Mammary epithelial cell (primary cell): ENCODE measurements at regions of chr11 and their contacts with region 1.

Region 1: GRCh38 chr11:123054301-123055065 is 7.5 kb downstream of the HSPA8 start:
- DNase-seq: peak; percentile 44
- H3K4me3 ChIP-seq: no peak overlapping the region
- H3K27ac ChIP-seq: no peak overlapping the region
- H3K4me1 ChIP-seq: peaks cover 14% of the 10 kb centered on the region
- H3K27me3 ChIP-seq: no peaks in the 10 kb centered on the region
- CTCF ChIP-seq: peak; percentile 53 to 63

Region 2: DNA sequence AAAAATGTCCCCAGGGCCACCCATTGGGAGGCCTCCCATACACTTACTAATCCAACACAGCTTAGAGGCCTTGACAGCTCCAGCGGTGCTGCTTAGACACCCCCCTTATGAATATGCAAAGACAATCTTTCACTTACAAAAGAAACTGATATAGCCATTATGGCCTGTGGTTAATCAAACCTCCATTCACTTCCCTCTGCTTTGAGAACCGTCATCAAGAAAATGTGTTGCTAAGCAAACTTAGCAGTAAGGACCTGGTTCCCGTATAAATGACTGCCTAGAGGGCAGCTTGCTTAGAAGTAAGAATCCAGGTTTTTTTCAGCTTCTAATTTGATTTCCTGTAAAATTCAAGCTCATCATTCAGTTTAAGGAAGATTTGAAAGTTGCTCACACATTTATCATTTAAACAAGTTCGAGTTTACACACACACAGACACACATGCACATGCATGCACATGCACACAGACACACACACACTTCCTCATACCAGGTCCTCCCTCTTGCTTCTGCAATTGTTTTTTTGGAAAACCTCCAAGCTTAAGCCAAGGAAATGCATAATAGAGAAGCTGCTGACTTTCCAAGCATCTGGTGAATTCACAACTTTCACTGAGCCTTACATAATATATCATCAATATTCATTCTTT is 800.8 kb before region 1 on chr11:
- CTCF ChIA-PET with region 1: interaction called, 10 read pairs
- dilution Hi-C with region 1: no loop called
- in situ Hi-C with region 1: no loop called
- intact Hi-C with region 1: no loop called
- DNase-seq: no peak
- H3K4me3 ChIP-seq: no peak overlapping the region
- H3K27ac ChIP-seq: no peak overlapping the region
- H3K4me1 ChIP-seq: peaks cover 7% of the 10 kb centered on the region
- H3K27me3 ChIP-seq: no peaks in the 10 kb centered on the region
- CTCF ChIP-seq: no peak

Region 3: GRCh38 chr11:122578168-122578825 is 476.2 kb before region 1 on chr11:
- CTCF ChIA-PET with region 1: no interaction called
- dilution Hi-C with region 1: no loop called
- in situ Hi-C with region 1: no loop called
- intact Hi-C with region 1: loop called (anchors 2 kb)
- DNase-seq: no peak
- H3K4me3 ChIP-seq: no peak overlapping the region
- H3K27ac ChIP-seq: no peak overlapping the region
- H3K4me1 ChIP-seq: peaks cover 10% of the 10 kb centered on the region
- H3K27me3 ChIP-seq: no peaks in the 10 kb centered on the region
- CTCF ChIP-seq: no peak

Region 4: DNA sequence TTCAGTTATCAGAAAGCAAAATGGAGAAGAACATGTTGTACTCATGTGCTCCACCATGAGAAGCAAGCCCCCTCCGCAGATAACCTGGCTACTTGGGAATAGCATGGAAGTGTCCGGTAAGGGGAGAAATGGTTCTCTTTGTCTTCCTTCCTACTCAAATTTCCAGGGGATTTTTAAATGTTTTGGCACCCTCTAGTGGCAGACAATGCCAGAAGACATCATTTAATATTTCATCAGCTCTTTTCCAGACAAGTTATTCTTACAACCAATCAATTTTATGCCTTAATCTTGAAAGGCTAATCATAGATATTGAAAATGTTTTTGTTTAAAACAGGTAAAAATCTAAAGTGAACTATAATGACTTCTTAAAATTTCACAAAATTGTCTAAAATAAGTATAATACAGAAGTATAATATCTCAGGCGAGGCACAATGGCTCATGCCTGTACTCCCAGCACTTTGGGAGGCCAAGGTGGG is 200.5 kb before region 1 on chr11:
- CTCF ChIA-PET with region 1: interaction called, 12 read pairs
- dilution Hi-C with region 1: no loop called
- in situ Hi-C with region 1: no loop called
- intact Hi-C with region 1: no loop called
- DNase-seq: peak; percentile 72
- H3K4me3 ChIP-seq: no peak overlapping the region
- H3K27ac ChIP-seq: no peak overlapping the region
- H3K4me1 ChIP-seq: peaks cover 35% of the 10 kb centered on the region
- H3K27me3 ChIP-seq: no peaks in the 10 kb centered on the region
- CTCF ChIP-seq: peak; percentile 63 to 67

Region 5: DNA sequence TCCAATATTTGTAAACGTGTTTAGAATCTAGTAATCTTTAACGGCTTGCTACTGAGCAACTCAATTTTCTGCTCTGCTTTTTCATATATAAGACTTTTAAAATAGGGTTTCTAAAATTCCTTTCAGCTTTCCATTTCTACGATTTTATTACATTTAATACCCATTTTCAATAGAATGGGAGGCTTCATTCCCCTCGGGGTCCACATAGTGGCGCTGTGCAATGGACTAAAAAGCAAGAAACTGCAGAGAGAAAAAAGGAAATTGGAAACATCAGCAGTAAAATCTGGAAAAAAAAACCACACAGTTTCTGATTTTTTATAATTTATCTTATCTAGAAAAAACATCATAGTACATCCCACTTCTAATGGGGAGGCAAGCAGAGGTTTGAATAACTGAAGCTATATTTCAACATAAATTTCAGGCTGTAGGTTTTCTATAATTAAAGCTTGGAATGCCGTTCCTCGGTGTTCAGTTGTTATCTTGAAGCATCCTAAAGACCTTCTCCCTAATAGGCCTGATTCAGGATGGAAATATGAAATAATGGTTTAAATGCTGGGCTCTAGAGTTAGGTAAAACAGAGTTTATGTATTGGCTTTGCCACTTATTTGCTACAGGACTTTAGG is 190.7 kb before region 1 on chr11:
- CTCF ChIA-PET with region 1: interaction called, 3 read pairs
- dilution Hi-C with region 1: no loop called
- in situ Hi-C with region 1: no loop called
- intact Hi-C with region 1: loop called (anchors 10 kb)
- DNase-seq: no peak
- H3K4me3 ChIP-seq: no peak overlapping the region
- H3K27ac ChIP-seq: no peak overlapping the region
- H3K4me1 ChIP-seq: peaks cover 6% of the 10 kb centered on the region
- H3K27me3 ChIP-seq: no peaks in the 10 kb centered on the region
- CTCF ChIP-seq: peak; percentile 85 to 90

Region 6: GRCh38 chr11:123116486-123116885 is 62.0 kb after region 1 on chr11:
- CTCF ChIA-PET with region 1: no interaction called
- dilution Hi-C with region 1: loop called (anchors 5 kb)
- in situ Hi-C with region 1: no loop called
- intact Hi-C with region 1: no loop called
- DNase-seq: peak; percentile 48
- H3K4me3 ChIP-seq: no peak overlapping the region
- H3K27ac ChIP-seq: no peak overlapping the region
- H3K4me1 ChIP-seq: peaks cover 15% of the 10 kb centered on the region
- H3K27me3 ChIP-seq: no peaks in the 10 kb centered on the region
- CTCF ChIP-seq: no peak

Region 7: GRCh38 chr11:123174196-123175183 is 120.0 kb after region 1 on chr11:
- CTCF ChIA-PET with region 1: no interaction called
- dilution Hi-C with region 1: no loop called
- in situ Hi-C with region 1: no loop called
- intact Hi-C with region 1: no loop called
- DNase-seq: peak; percentile 77
- H3K4me3 ChIP-seq: no peak overlapping the region
- H3K27ac ChIP-seq: peak overlapping the region; percentile 71
- H3K4me1 ChIP-seq: peaks cover 32% of the 10 kb centered on the region
- H3K27me3 ChIP-seq: no peaks in the 10 kb centered on the region
- CTCF ChIP-seq: no peak

Region 8: DNA sequence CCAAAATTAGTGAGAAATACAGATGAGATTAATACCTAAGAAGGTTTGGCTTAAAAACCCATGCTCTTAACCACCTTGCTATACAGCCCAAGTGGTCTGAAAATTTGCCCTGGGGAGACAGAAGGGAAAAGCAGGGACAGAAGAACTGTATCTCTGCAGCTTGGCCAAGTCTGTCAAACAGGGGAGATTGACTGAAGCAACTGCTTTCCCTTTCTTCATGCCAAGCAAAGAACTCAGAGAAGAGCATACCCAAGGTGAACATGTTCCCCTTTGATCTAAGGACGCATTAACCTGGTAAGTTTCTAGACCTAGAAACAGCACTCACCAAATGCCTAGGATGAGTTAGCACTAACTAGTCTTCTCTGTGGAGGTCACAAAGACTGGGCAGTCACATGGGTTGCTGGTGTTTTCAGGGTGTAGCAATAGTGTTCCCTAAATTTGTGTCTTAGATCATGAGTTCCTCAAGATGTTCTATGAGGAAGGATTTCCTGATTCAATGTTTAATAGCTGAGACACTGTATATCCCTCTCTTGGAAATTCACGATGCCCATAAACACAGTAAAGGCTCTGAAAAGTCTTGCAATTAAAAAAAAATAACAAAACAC is 300.0 kb after region 1 on chr11:
- CTCF ChIA-PET with region 1: interaction called, 23 read pairs
- dilution Hi-C with region 1: no loop called
- in situ Hi-C with region 1: no loop called
- intact Hi-C with region 1: no loop called
- DNase-seq: no peak
- H3K4me3 ChIP-seq: no peak overlapping the region
- H3K27ac ChIP-seq: no peak overlapping the region
- H3K4me1 ChIP-seq: peaks cover 5% of the 10 kb centered on the region
- H3K27me3 ChIP-seq: peaks cover 18% of the 10 kb centered on the region
- CTCF ChIP-seq: no peak